GM10248 (cell line): ENCODE measurements at regions of chr10 and their contacts with region 1.

Region 1: GRCh38 chr10:68231106-68231816 is 652 bp downstream of the ATOH7 start:
- DNase-seq: peak; percentile 87
- CTCF ChIP-seq: no peak

Region 2: DNA sequence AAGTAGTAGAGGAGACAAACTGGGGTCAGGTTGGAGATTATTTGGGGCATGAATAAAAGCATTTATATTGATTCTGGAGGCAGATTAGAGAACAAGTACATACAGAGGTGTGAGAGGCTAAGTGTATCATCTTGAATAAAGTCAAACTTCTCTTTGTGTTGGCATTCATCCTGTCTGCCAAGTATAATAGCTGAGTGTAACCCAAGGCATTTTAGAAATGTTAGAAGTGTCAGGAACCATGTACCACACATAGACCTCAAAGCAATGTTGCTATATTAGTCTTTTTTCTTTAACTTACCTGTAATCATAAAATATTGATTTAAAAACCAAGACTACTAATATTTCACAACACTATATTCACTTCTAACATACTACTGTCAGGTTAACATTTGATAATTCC is 1361.6 kb before region 1 on chr10:
- CTCF ChIA-PET with region 1: no interaction called
- POLR2A ChIA-PET with region 1: no interaction called
- DNase-seq: no peak
- CTCF ChIP-seq: no peak

Region 3: GRCh38 chr10:67925449-67926005 is 305.7 kb before region 1 on chr10:
- CTCF ChIA-PET with region 1: no interaction called
- POLR2A ChIA-PET with region 1: no interaction called
- DNase-seq: no peak
- CTCF ChIP-seq: no peak

Region 4: DNA sequence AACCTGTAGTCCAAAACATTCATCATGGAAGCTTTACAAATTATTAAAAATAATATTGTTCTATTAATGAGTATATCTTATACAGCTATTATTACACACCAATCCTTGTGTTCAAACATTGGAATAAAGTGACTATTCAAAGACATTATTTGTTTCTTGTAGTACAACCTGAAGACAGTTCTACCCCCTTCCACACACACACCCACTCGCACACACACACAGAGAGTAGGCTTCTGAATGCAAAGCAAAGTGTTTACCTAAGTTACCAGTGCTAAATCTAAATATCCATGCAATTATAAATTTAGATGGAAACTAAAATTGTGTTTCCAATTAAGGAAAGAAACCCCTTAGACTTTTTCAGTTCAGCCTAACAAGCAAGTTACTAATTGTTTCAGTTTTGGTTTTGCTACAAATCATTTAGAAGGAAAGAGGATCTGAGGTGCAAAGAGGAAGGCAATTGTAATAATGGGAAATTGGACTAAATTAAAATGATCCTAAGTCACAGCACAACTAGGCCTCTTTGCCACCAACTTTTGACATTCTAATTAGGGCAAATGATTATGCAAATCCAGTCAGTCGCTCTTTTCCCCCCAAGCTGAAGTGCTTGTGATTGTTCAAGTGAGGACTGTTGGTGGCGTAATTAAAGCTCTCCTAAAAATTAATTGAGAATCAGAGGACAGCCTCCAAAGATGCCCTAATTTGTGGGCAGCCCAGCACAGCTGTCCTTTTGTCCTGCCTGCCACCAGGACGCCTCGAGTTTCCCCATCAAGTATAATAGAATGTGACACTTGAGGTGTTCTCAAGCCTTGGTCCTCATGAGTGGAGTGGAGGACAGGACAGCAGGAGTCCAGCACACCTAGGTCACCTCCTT is 20.6 kb after region 1 on chr10:
- CTCF ChIA-PET with region 1: interaction called, 10 read pairs
- POLR2A ChIA-PET with region 1: no interaction called
- DNase-seq: peak; percentile 37
- CTCF ChIP-seq: no peak

Region 5: GRCh38 chr10:68271196-68271882 is 40.1 kb after region 1 on chr10:
- CTCF ChIA-PET with region 1: no interaction called
- POLR2A ChIA-PET with region 1: no interaction called
- DNase-seq: no peak
- CTCF ChIP-seq: no peak